ENCODE measurements at regions of chr5 and their contacts with region 1.

Region 1: DNA sequence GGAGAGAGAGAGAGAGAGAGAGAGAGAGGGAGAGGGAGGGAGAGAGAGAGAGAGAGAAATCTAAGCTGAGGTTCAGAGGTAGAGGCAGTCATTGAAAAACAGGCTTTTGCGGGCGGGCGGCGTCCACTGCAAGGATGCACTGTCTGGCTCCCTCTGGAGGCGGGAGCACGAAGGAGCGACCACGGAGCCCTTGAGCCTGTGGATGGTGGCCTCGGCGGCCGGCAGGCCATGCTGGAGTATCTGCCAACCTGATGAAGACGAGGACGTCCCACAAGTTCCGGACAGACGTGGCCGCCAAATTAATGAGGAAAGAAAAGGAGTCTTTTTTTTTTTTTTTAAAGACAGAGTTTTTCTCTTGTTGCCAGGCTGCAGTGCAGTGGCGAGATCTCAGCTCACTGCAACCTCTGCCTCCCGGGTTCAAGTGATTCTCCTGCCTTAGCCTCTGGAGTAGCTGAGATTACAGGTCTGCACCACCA is 2.2 kb upstream of the CCDC125 start:
- DNase-seq: peak; percentile 79 to 88 (median 86)
- H3K4me3 ChIP-seq: peak overlapping the region in 37 of 59 donors; percentile 7 to 51 (median 32)
- H3K27ac ChIP-seq: peak overlapping the region in 4 of 59 donors; percentile 16 to 39 (median 24)
- H3K27me3 ChIP-seq: no peaks in the 10 kb centered on the region
- CTCF ChIP-seq: peak; percentile 30 to 81 (median 70)

Region 2: GRCh38 chr5:69042915-69043658 is 291.7 kb before region 1 on chr5:
- intact Hi-C with region 1: loop called (anchors 5 kb)
- DNase-seq: peak in 7 of 10 donors; percentile 36 to 78 (median 55)
- H3K4me3 ChIP-seq: peak overlapping the region; percentile 23 to 78 (median 58)
- H3K27ac ChIP-seq: peak overlapping the region; percentile 5 to 93 (median 84)
- H3K27me3 ChIP-seq: no peaks in the 10 kb centered on the region
- CTCF ChIP-seq: peak; percentile 73 to 97 (median 88)

Region 3: GRCh38 chr5:69285448-69286116 is 49.2 kb before region 1 on chr5:
- intact Hi-C with region 1: no loop called
- DNase-seq: no peak
- H3K4me3 ChIP-seq: no peak overlapping the region
- H3K27ac ChIP-seq: no peak overlapping the region
- H3K27me3 ChIP-seq: no peaks in the 10 kb centered on the region
- CTCF ChIP-seq: no peak

Measured in dorsolateral prefrontal cortex (tissue), 120 donors.